ENCODE measurements at regions of chr11 and their contacts with region 1.

Region 1: DNA sequence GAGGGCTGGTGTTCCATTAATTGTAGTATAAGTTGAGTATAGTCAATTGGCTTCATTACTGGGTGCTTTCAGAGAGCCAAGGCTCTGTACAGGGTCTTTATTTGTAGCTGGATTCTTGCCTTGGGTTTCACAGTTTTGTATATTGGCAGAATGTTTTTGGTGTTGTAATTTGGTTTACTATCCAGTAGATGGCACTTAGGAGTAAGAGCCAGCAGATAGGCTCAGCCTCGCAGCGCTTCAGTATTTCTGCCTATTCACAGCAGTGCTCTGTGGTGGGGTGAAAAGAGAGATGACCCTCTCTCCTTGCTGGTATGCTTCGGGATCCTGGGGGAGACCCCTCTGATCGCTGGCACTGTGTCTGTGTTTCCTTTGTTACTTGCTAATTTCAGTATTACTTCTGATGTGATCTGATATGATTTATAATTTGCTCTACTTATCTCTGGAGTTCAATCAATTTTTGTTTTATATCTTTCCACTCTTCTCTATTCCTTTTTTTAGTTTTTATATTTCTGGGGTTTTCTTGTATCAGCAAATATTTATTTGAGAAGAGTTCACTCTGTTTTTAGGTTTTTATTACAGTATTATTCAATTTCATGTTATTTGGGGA is 52.2 kb downstream of the ANO5 start:
- DNase-seq: peak in 1 of 2 experiments; percentile 25
- H3K4me3 ChIP-seq: no peak overlapping the region
- H3K27ac ChIP-seq: no peak overlapping the region
- H3K4me1 ChIP-seq: no peaks in the 10 kb centered on the region
- H3K27me3 ChIP-seq: no peaks in the 10 kb centered on the region
- CTCF ChIP-seq: peak in 2 of 3 experiments; percentile 65 to 80; a peak in 3 of 4 replicates
- EP300 ChIP-seq: no peak
- POLR2A ChIP-seq: no peak
- RAD21 ChIP-seq: peak; percentile 71 to 75

Region 2: GRCh38 chr11:22234743-22235142 is 10.3 kb before region 1 on chr11:
- CTCF ChIA-PET with region 1: interaction called, 17 read pairs
- POLR2A ChIA-PET with region 1: no interaction called
- DNase-seq: peak in 1 of 2 experiments; percentile 1
- H3K4me3 ChIP-seq: peak overlapping the region in 1 of 4 experiments; percentile 34; a peak in 1 of 8 replicates
- H3K27ac ChIP-seq: no peak overlapping the region
- H3K4me1 ChIP-seq: peaks cover 0 to 2% (median 0%) of the 10 kb centered on the region in 4 experiments; a peak in 3 of 7 replicates
- H3K27me3 ChIP-seq: no peaks in the 10 kb centered on the region
- CTCF ChIP-seq: no peak
- EP300 ChIP-seq: 0 out of 3 replicates have a peak, but pooled peaks of 1 of the 2 experiments have one; percentile 25
- POLR2A ChIP-seq: no peak
- RAD21 ChIP-seq: no peak

Region 3: DNA sequence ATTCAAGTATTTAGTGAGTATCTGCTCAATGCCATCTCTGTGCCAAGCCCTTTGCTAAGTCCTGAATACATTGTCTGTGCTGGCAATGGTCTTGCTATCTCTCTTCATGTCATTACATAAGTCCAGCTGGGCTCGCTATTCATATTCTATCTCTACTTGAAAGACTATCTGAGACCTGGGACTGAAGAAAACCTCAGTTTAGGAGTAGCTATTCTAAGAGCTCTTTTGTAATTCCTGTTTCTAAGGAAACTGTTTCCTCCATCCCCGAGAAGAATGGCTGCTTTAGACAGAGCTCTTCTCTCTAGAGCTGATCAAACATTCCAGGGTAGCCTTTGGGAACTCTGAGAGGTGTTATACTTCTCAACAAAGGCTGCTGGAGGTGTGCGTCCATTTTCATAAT is 126.1 kb after region 1 on chr11:
- CTCF ChIA-PET with region 1: no interaction called
- POLR2A ChIA-PET with region 1: no interaction called
- DNase-seq: no peak
- H3K4me3 ChIP-seq: peak overlapping the region in 1 of 4 experiments; percentile 36; a peak in 1 of 8 replicates
- H3K27ac ChIP-seq: no peak overlapping the region
- H3K4me1 ChIP-seq: peaks cover 0 to 9% (median 2%) of the 10 kb centered on the region in 4 experiments; a peak in 1 of 7 replicates
- H3K27me3 ChIP-seq: no peaks in the 10 kb centered on the region
- CTCF ChIP-seq: no peak
- EP300 ChIP-seq: no peak
- POLR2A ChIP-seq: no peak
- RAD21 ChIP-seq: no peak

Region 4: GRCh38 chr11:22432291-22433093 is 187.4 kb after region 1 on chr11:
- CTCF ChIA-PET with region 1: no interaction called
- POLR2A ChIA-PET with region 1: no interaction called
- DNase-seq: peak in 1 of 2 experiments; percentile 69
- H3K4me3 ChIP-seq: peak overlapping the region; percentile 26 to 52 (median 31); a peak in 6 of 8 replicates
- H3K27ac ChIP-seq: no peak overlapping the region
- H3K4me1 ChIP-seq: peaks cover 4 to 12% (median 6%) of the 10 kb centered on the region in 4 experiments; a peak in 6 of 7 replicates
- H3K27me3 ChIP-seq: 0 out of 7 replicates have a peak, but pooled peaks cover 0 to 3% (median 0%) of the 10 kb centered on the region in 4 experiments
- CTCF ChIP-seq: no peak
- EP300 ChIP-seq: no peak
- POLR2A ChIP-seq: no peak
- RAD21 ChIP-seq: no peak; a peak in 1 of 4 replicates

Region 5: DNA sequence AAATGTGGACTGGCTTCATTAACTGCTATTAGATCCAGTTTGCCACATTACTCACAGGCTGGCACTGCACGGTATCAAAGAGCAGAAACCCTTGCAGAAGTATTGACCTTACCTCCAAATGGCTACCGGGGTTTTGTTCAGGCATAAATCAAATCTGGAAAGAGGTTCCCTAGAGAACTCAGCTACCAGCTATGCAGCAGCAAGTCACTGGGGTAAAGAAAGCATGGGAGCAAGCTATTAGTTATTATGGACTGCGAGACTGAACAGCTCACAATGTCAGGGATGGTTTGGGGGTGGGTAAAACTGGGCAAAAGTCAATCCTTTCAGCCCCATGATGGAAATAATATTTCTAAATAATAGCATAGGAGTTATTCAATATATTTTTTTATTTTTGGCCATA is 252.4 kb after region 1 on chr11:
- CTCF ChIA-PET with region 1: no interaction called
- POLR2A ChIA-PET with region 1: no interaction called
- DNase-seq: no peak
- H3K4me3 ChIP-seq: no peak overlapping the region
- H3K27ac ChIP-seq: no peak overlapping the region
- H3K4me1 ChIP-seq: no peaks in the 10 kb centered on the region
- H3K27me3 ChIP-seq: no peaks in the 10 kb centered on the region
- CTCF ChIP-seq: no peak
- EP300 ChIP-seq: no peak
- POLR2A ChIP-seq: no peak
- RAD21 ChIP-seq: no peak

Measured in H1 (cell line).